ENCODE measurements at regions of chr16 and their contacts with region 1.

Region 1: DNA sequence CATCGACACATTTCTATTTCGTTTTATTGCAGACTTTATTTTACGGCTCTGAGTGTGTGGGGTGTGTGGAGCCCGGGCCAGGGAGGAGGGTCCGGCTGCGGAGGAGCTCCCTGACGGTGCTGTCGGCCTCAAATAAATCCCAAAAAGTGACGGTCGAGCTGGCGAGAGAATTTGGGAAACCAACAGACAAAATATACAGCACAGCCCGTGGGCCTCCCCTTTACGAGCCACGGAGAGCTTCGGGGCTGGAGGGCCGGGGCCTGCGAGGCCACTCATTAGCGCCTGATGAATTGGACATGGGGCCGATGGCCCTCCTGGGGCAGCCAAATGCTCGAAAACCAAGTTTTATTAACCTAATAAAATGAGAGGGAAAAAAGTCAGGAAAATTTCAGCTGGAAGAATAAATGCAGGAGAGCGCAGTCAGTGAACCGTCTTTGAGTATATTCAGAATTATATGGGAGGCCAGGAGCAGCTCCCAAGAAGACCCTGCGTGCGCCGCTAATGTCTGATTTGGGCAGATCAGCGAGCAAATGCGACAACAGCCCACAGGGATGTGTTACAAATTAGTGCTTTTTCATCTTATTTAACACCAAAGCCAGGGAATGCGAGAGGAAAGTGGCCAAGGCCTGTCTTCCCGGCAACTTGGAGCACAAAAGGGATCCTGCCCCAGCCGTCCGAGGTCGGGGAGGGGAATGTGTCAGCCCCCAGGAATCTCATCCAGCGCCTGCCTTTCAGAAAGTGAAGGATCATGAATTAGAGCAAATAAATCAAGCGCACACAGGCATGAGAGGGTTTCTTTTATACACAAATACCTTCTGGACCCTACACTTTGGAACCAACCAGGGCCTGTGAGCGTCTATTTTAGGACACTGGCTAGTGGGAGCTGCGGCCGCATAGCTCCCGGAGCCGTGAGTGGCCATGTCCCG is 249.1 kb downstream of the C16orf95 start:
- DNase-seq: no peak
- H3K4me3 ChIP-seq: peak overlapping the region; percentile 23 to 24
- H3K27ac ChIP-seq: peak overlapping the region; percentile 79 to 83
- H3K4me1 ChIP-seq: peaks cover 0 to 28% (median 4%) of the 10 kb centered on the region in 4 donors
- H3K27me3 ChIP-seq: no peaks in the 10 kb centered on the region
- CTCF ChIP-seq: no peak

Region 2: GRCh38 chr16:86929057-86929871 is 138.8 kb before region 1 on chr16:
- intact Hi-C with region 1: no loop called
- DNase-seq: peak; percentile 30 to 73
- H3K4me3 ChIP-seq: peak overlapping the region in 1 of 2 donors; percentile 13
- H3K27ac ChIP-seq: peak overlapping the region in 1 of 2 donors; percentile 4
- H3K4me1 ChIP-seq: peaks cover 0 to 29% (median 21%) of the 10 kb centered on the region in 4 donors
- H3K27me3 ChIP-seq: no peaks in the 10 kb centered on the region
- CTCF ChIP-seq: no peak

Region 3: GRCh38 chr16:87056083-87056482 is 12.0 kb before region 1 on chr16:
- intact Hi-C with region 1: no loop called
- DNase-seq: peak in 1 of 2 donors; percentile 56
- H3K4me3 ChIP-seq: no peak overlapping the region
- H3K27ac ChIP-seq: no peak overlapping the region
- H3K4me1 ChIP-seq: peaks cover 0 to 24% (median 5%) of the 10 kb centered on the region in 4 donors
- H3K27me3 ChIP-seq: no peaks in the 10 kb centered on the region
- CTCF ChIP-seq: peak in 1 of 2 experiments; percentile 16

Region 4: GRCh38 chr16:87278191-87279095 is 210.3 kb after region 1 on chr16:
- intact Hi-C with region 1: loop called (anchors 5 kb)
- DNase-seq: peak; percentile 76 to 89
- H3K4me3 ChIP-seq: no peak overlapping the region
- H3K27ac ChIP-seq: no peak overlapping the region
- H3K4me1 ChIP-seq: peaks cover 0 to 8% (median 2%) of the 10 kb centered on the region in 4 donors
- H3K27me3 ChIP-seq: no peaks in the 10 kb centered on the region
- CTCF ChIP-seq: peak; percentile 82 to 93